ENCODE measurements at regions of chr1 and their contacts with region 1.

Region 1: GRCh38 chr1:115138968-115139367 is 49.7 kb upstream of the TSPAN2 start:
- DNase-seq: peak; percentile 84 to 96
- H3K4me3 ChIP-seq: no peak overlapping the region
- CTCF ChIP-seq: peak in 1 of 3 donors; percentile 60
- POLR2A ChIP-seq: no peak

Region 2: GRCh38 chr1:114979278-114979891 is 159.6 kb before region 1 on chr1:
- intact Hi-C with region 1: no loop called
- DNase-seq: peak; percentile 66 to 87
- H3K4me3 ChIP-seq: no peak overlapping the region
- CTCF ChIP-seq: peak in 1 of 3 donors; percentile 31
- POLR2A ChIP-seq: no peak

Region 3: GRCh38 chr1:115469703-115470476 is 330.9 kb after region 1 on chr1:
- intact Hi-C with region 1: loop called (anchors 5 kb)
- DNase-seq: peak in 1 of 2 donors; percentile 72
- H3K4me3 ChIP-seq: no peak overlapping the region
- CTCF ChIP-seq: peak in 1 of 3 donors; percentile 46
- POLR2A ChIP-seq: no peak

Region 4: DNA sequence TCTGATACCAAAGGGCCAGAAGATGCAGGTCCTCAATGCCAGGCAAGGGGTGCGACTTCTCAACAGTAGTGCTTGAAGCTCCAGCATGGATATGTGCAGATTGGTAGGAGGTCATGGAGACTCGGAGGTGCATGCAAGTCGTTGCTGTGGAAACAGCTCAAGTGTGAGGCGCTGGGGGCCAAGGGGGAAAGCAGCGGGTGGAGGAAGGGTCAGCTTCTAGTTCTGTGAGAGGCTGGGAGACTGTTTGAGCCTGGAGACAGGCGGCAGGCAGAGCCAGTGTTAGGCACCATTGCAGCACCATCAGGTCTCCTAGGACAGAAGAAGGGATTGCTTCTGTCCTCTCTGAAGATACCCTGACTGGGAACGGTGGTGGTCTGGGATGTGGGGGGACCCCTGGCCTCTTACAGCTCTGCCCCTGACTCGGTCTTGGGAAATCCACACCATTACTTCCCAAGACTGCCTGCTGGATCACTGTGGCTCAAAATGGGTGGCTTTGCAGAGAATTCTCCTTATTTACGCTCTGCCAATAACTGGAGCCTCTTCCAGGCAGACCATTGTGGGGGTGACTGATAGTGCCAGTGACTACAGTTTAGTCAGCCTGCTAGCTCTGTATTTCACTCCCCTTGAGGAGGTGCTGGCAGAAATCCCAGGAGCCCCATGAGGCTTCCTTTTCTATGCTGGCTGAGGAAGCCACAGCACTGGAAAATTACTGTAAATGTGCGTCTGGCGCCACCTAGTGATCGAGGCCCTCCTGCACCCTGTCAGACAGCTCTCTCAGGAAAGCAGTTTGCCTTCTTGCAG is 456.5 kb after region 1 on chr1:
- intact Hi-C with region 1: loop called (anchors 5 kb)
- DNase-seq: peak; percentile 79 to 96
- H3K4me3 ChIP-seq: no peak overlapping the region
- CTCF ChIP-seq: no peak
- POLR2A ChIP-seq: no peak

Measured in lower leg skin (tissue), 4 donors.